AG04450 (cell line): ENCODE measurements at regions of chr6 and their contacts with region 1.

Region 1: GRCh38 chr6:69090132-69090531 is 455.1 kb downstream of the ADGRB3 start:
- DNase-seq: peak; percentile 10
- H3K4me3 ChIP-seq: no peak overlapping the region
- H3K27ac ChIP-seq: no peak overlapping the region
- H3K27me3 ChIP-seq: no peaks in the 10 kb centered on the region
- CTCF ChIP-seq: no peak

Region 2: GRCh38 chr6:69069881-69070280 is 20.3 kb before region 1 on chr6:
- CTCF ChIA-PET with region 1: no interaction called
- POLR2A ChIA-PET with region 1: no interaction called
- DNase-seq: no peak
- H3K4me3 ChIP-seq: no peak overlapping the region
- H3K27ac ChIP-seq: no peak overlapping the region
- H3K27me3 ChIP-seq: no peaks in the 10 kb centered on the region
- CTCF ChIP-seq: no peak

Region 3: GRCh38 chr6:69164564-69165229 is 74.6 kb after region 1 on chr6:
- CTCF ChIA-PET with region 1: interaction called, 10 read pairs
- POLR2A ChIA-PET with region 1: no interaction called
- DNase-seq: no peak
- H3K4me3 ChIP-seq: no peak overlapping the region
- H3K27ac ChIP-seq: no peak overlapping the region
- H3K27me3 ChIP-seq: no peaks in the 10 kb centered on the region
- CTCF ChIP-seq: peak; percentile 20; the same call in 1 of the 2 replicates